Motor neuron (in vitro differentiated cells): ENCODE measurements at regions of chr12 and their contacts with region 1.

Region 1: DNA sequence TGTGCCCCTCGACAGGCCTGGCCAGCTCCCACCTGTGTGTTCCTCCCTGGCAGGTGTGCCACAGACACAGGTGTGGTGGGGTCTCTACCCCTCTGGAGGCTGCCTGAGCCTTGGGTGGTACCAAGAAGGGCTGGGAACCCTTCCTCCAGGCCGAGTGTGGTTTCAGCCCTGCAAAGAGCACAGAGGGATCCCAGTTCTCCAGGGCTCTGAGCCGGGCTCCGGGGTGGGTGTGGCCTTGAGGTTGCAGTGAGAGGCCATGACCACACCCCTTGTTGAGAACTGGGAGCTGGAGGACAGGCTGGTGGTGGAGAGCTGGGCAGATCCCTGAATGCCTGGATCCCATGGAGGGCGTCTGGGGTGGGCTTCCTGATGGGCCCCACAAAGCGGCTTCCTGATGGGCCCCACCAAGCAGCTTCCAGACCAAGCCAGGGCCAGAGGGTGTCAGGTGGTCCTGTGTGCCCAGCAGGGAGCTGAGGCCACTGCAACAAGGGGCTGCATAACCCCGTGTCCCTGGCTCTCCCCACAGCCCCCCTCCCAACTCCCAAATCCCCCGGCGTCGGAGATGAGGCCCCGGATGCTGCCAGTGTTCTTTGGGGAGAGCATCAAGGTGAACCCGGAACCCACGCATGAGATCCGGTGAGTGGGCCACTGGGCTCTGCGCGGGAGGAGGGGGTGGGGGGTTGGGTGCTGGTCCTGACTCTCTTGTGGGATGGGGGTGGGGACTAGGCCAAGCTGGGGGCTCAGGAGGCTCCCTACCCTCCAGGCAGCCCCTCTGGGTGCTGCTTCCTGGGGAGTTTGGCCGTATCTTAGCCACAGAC is 16.6 kb downstream of the RFLNA start:
- ATAC-seq: peak in 3 of 8 experiments; percentile 14 to 74 (median 61)
- H3K4me3 ChIP-seq: no peak overlapping the region
- H3K27ac ChIP-seq: no peak overlapping the region
- H3K4me1 ChIP-seq: peaks cover 13 to 15% of the 10 kb centered on the region in 2 donors

Region 2: GRCh38 chr12:123580772-123581171 is 730.7 kb before region 1 on chr12:
- in situ Hi-C with region 1: no loop called
- ATAC-seq: no peak
- H3K4me3 ChIP-seq: no peak overlapping the region
- H3K27ac ChIP-seq: no peak overlapping the region
- H3K4me1 ChIP-seq: peaks cover 13 to 15% of the 10 kb centered on the region in 2 donors

Region 3: DNA sequence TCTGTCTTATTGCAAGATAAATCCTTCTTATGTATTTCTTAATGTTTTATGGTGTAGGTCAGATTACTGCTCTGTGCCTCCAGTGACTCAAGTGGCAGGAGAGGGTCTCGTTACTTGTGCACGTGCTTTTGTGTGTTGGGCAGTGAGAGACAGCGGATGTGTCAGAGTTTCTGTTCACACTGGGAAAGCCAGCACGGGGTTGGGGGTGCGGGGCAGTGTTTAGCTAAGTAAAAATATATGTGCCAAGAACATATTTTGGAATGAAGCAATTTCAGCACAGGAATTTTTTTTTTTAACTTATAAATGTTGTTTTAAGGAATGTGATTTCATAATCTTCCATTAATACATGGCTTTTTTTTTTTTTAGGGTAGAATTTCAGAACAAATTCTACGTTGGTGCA is 553.9 kb before region 1 on chr12:
- in situ Hi-C with region 1: no loop called
- ATAC-seq: no peak
- H3K4me3 ChIP-seq: no peak overlapping the region
- H3K27ac ChIP-seq: no peak overlapping the region
- H3K4me1 ChIP-seq: peaks cover 0 to 4% of the 10 kb centered on the region in 2 donors

Region 4: GRCh38 chr12:123983822-123984485 is 327.5 kb before region 1 on chr12:
- in situ Hi-C with region 1: no loop called
- ATAC-seq: peak in 6 of 8 experiments; percentile 55 to 92 (median 84)
- H3K4me3 ChIP-seq: no peak overlapping the region
- H3K27ac ChIP-seq: no peak overlapping the region
- H3K4me1 ChIP-seq: peaks cover 7 to 15% of the 10 kb centered on the region in 2 donors

Region 5: GRCh38 chr12:124044809-124045321 is 266.6 kb before region 1 on chr12:
- in situ Hi-C with region 1: loop called in 5 of 9 experiments (anchors 10 to 25 kb)
- ATAC-seq: peak; percentile 12 to 89 (median 64)
- H3K4me3 ChIP-seq: no peak overlapping the region
- H3K27ac ChIP-seq: no peak overlapping the region
- H3K4me1 ChIP-seq: peaks cover 15 to 19% of the 10 kb centered on the region in 2 donors

Region 6: DNA sequence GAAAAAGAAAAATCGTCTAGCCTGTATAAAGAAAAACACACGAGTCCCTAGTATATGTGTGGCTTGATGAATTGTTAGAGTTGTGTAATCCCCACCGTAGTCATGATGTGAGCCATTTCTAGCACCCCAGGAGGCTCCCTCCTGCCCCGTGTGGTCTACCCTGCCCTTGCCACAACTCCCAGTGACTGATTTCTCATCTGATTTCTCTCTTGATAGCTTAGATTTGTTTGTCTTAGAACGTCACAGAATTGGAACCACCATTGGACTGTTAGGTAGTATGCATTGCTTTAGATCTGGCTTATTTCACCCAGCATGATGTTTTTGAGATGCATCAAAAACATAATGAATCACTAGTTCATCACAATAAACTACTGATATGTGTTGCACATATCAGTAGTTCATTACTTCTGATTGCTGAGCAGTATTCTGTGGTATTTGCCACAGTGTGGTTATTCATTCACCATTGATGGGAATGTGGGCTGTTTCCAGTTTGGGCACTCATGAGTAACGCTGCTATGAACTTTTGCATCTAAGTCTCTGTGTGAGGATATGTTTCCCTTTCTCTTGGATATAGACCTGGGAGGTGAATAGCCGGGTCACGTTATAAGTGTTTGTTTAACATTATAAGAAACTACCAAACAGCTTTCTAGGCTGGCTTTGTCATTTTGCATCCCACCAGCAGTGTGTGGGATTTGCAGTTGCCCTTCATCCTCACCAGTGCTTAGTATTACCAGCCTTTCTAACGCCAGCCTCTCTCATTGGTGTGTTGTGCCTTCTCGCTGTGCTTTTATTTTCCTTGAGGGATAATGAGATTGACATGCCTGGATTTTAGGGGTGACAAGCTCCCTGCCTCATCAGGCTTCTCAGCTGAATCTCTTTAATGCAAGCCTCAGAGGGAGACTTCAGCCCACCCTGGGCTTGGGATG is 287.8 kb after region 1 on chr12:
- in situ Hi-C with region 1: no loop called
- ATAC-seq: no peak
- H3K4me3 ChIP-seq: no peak overlapping the region
- H3K27ac ChIP-seq: no peak overlapping the region
- H3K4me1 ChIP-seq: peaks cover 16 to 17% of the 10 kb centered on the region in 2 donors